Dorsolateral prefrontal cortex (tissue), 120 donors: ENCODE measurements at regions of chr6 and their contacts with region 1.

Region 1: DNA sequence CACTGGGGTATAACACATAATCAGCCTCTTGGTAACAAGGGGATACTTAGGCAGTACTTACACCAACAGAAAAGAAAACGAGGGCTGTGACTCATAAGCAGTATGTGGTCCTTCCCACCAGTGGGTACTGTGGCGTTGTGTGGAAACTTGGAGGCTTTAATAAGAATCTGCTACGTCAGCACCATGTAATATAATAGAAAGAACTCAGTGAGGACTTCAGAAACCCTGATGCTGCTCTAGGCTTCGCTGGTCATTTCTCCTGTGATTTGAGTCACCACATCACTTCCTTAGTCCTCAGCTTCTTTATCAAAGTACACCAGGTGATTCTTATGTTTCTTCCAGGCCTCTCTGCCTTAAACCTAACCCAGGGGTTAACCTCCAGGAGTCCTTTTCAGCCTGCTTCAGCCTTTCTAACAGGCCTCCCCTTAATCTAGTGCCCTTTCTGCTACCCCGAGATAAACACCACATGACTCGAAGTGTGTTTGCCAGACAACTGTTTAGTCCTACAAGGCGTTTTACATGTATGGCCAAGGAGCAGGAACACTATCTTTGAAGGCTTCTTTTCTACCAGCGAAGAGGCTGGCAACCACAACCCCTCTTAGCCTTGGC is 68.5 kb downstream of the FYN start:
- DNase-seq: no peak
- H3K4me3 ChIP-seq: no peak overlapping the region
- H3K27ac ChIP-seq: peak overlapping the region in 56 of 59 donors; percentile 0 to 90 (median 72)
- H3K27me3 ChIP-seq: no peaks in the 10 kb centered on the region
- CTCF ChIP-seq: peak in 1 of 56 donors; percentile 10

Region 2: DNA sequence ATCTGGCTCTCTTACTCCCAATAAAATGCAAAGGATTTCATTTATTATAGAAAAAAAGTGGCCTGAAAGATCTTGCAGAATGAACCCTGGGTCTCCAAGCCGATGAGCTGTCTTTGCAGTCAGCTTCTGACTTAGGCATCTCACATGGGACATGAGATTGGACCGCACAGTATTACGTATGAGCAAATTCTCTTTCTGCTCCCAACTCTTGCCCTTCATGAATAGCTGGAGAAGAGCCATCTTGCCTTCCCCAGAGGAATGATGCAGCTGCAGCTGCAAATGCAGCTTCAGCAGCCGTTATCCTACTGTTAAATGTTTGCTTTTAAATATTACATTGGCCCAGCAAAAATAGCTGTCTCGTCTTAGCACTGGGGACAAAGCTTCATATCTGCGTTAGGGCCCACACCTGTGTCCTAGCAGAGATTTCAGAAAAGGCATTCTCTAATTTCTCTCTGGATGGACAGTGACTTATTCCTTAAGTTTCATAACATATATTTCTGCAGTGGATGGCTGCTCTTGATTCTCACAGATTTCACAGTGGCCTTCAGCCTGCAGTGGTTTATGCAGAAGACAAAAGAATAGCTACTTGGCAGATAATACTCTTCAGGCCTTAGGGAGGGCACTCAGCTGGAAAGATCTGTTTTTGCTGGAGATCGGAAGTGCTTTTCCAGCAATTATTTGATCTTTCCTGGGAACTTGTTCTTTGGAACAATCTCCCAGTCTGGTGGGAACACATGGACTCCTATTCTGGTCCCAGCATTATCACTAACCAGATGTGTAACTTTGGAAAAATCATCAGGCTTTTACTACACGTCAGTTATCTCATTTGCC is 60.7 kb before region 1 on chr6:
- intact Hi-C with region 1: loop called (anchors 5 to 10 kb)
- DNase-seq: peak in 1 of 10 donors; percentile 64
- H3K4me3 ChIP-seq: peak overlapping the region in 46 of 59 donors; percentile 1 to 51 (median 26)
- H3K27ac ChIP-seq: peak overlapping the region; percentile 8 to 95 (median 84)
- H3K27me3 ChIP-seq: no peaks in the 10 kb centered on the region
- CTCF ChIP-seq: peak in 4 of 56 donors; percentile 7 to 28 (median 13)